ENCODE measurements at regions of chr18 and their contacts with region 1.

Region 1: DNA sequence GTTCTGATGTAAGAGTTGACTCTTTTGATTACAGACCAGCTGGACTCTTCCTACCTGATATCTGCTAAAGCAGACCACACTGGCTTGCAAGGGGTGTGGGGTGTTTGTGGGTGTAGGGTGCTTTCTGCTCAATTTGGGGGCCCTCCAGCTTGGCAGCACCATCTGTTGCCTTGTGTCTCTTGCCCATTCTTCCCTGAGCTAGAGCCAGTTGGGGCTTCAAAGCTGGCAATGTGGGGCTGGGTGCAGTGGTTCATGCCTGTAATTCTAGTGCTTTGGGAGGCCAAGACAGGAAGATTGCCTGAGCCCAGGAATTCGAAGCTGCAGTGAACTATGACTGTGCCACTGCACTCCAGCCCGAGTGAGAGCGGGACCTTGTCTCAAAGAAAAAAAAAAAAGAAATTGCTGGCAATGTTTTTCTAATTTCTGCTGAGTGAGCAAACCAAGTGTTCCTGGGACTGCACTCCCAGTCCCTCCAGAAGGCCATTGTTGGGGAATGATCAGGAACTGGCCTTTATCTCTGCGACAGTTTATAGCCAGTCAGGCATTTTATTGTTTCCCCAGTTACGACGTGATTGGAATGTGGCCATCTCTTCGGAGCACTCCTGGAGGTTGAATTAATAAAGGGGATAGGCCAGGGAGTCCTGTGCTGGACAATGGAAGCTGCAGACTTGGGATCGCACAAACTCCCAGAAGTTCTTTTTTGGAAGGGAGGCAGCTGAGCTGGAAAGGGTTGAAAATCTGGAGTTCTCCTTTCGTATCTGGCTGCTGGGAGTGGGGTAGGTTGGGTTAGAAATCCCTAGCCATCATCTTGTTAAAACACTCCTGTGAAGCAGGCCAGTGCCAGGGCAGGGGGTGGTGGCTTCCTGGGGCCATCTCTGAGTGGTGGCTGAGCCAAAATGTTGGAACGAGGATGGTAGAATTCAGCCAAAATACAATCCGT is 57.2 kb downstream of the LIPG start:
- DNase-seq: peak; percentile 55
- H3K4me3 ChIP-seq: no peak overlapping the region
- H3K27ac ChIP-seq: no peak overlapping the region
- H3K4me1 ChIP-seq: peaks cover 14% of the 10 kb centered on the region
- H3K27me3 ChIP-seq: peaks cover 0 to 2% of the 10 kb centered on the region in 2 experiments
- CTCF ChIP-seq: no peak
- POLR2A ChIP-seq: no peak

Region 2: GRCh38 chr18:48680339-48681221 is 938.4 kb before region 1 on chr18:
- CTCF ChIA-PET with region 1: no interaction called
- POLR2A ChIA-PET with region 1: no interaction called
- dilution Hi-C with region 1: no loop called
- intact Hi-C with region 1: no loop called
- DNase-seq: peak; percentile 96
- H3K4me3 ChIP-seq: no peak overlapping the region
- H3K27ac ChIP-seq: peak overlapping the region; percentile 42
- H3K4me1 ChIP-seq: peaks cover 17% of the 10 kb centered on the region
- H3K27me3 ChIP-seq: no peaks in the 10 kb centered on the region
- CTCF ChIP-seq: peak; percentile 26 to 67
- POLR2A ChIP-seq: no peak

Region 3: DNA sequence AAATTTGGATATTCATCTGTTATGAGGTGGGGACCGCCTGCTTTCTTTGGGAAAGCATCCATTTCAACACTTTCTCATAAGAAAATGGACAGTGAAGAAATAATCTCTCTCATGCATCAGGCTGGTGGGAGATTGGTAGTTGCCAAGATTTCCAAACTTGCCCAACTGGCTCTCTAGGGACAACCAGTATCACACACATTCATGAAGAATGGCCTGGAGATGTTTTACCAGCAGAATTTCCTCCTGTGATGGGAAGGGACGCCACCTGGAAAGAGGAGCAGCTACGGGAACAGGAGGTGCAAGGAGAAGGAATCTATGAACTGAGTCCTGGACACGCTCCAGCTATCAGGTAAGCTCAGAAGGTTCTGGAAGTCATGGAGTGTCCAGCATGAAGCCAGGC is 17.8 kb before region 1 on chr18:
- CTCF ChIA-PET with region 1: interaction called, 4 read pairs
- POLR2A ChIA-PET with region 1: no interaction called
- dilution Hi-C with region 1: no loop called
- intact Hi-C with region 1: loop called (anchors 2 kb)
- DNase-seq: no peak
- H3K4me3 ChIP-seq: no peak overlapping the region
- H3K27ac ChIP-seq: no peak overlapping the region
- H3K4me1 ChIP-seq: no peaks in the 10 kb centered on the region
- H3K27me3 ChIP-seq: no peaks in the 10 kb centered on the region
- CTCF ChIP-seq: no peak
- POLR2A ChIP-seq: no peak